ENCODE measurements at regions of chr7 and their contacts with region 1.

Region 1: DNA sequence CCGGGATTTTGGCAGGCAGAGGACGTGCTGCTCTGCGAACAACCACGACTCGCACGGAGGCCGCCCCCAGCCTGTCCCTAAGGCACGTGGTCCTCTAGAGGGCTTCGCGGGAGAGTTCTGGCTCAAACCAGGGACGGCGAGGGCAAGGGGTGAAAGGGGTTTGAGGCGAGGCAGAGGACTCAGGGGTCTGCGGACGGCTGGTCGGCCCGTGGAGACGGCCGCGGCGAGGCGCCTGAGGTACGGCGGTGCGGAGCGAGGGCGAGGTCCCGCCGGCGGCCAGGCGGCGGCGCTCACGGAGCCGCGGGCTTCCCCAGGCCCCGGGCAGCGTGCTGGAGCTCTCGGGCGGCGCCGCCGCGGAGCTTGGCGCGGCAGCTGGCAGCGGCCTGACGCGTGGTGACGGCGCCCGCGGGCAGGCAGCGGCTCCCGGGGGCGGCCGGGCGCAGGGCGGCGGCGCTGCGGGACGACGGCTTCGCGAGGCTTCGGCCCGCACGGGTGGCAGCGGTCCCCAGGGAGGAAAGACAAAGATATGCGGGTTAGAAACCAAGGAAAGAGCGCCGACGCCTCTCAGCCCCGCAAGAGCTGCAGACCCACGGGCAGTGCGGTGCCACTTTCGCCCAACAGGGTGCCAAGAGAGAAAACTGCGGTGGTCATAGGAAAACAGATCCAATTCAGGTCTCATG is 44.8 kb downstream of the ZNF800 start:
- DNase-seq: peak; percentile 58
- H3K4me3 Mint-ChIP-seq: peak overlapping the region; percentile 22
- H3K27ac Mint-ChIP-seq: no peak overlapping the region
- H3K4me1 Mint-ChIP-seq: peaks cover 11% of the 10 kb centered on the region
- H3K27me3 Mint-ChIP-seq: peaks cover 23% of the 10 kb centered on the region

Region 2: GRCh38 chr7:127253281-127254162 is 94.2 kb before region 1 on chr7:
- intact Hi-C with region 1: loop called (anchors 2 kb)
- DNase-seq: peak; percentile 41
- H3K4me3 Mint-ChIP-seq: peak overlapping the region; percentile 80
- H3K27ac Mint-ChIP-seq: no peak overlapping the region
- H3K4me1 Mint-ChIP-seq: peaks cover 9% of the 10 kb centered on the region
- H3K27me3 Mint-ChIP-seq: peaks cover 70% of the 10 kb centered on the region

Region 3: GRCh38 chr7:127413962-127414361 is 66.3 kb after region 1 on chr7:
- intact Hi-C with region 1: loop called (anchors 5 kb)
- DNase-seq: no peak
- H3K4me3 Mint-ChIP-seq: no peak overlapping the region
- H3K27ac Mint-ChIP-seq: no peak overlapping the region
- H3K4me1 Mint-ChIP-seq: peaks cover 39% of the 10 kb centered on the region
- H3K27me3 Mint-ChIP-seq: peaks cover 25% of the 10 kb centered on the region

Region 4: DNA sequence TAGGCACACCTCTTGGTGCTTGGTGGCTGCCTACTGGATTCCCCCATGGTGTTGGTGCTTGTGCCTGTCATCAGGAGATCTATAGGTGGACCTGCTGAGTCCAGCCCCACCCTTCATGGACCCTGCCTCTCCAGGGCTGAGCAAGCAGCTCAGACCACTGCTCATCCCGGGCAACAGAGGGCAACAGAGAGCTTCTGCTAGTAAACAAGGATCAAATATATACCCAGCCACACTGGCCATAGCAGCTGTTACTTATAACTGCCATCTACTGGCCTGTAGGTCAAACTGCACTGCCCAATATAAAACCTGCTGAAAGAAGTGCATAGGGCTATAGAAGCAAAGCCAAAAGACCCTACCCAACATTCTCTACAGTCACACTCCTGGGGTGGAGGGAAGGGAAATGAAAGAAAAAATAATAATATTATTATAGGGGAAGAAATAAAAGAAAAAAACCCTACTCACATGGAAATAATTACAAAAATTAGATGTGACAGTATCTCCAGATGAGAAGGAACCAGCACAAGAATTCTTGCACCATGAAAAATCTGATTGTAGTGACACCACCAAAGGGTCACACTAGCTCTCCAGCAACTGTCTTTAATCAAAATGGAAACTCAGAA is 99.7 kb after region 1 on chr7:
- intact Hi-C with region 1: loop called (anchors 1 kb)
- DNase-seq: peak; percentile 53
- H3K4me3 Mint-ChIP-seq: no peak overlapping the region
- H3K27ac Mint-ChIP-seq: no peak overlapping the region
- H3K4me1 Mint-ChIP-seq: peaks cover 7% of the 10 kb centered on the region
- H3K27me3 Mint-ChIP-seq: peaks cover 41% of the 10 kb centered on the region

Measured in activated T-helper 2 cell treated with anti-CD3 and anti-CD28 coated beads, Interferon-gamma antibody, Interleukin-2, Interleukin-4, amounts not matched to agents 10 μg/mL and 5 μg/mL and 100 μg/mL, durations not matched to agents 14 hours and 24 hours and 36 hours (primary cell).